ENCODE measurements at regions of chr2 and their contacts with region 1.

Region 1: DNA sequence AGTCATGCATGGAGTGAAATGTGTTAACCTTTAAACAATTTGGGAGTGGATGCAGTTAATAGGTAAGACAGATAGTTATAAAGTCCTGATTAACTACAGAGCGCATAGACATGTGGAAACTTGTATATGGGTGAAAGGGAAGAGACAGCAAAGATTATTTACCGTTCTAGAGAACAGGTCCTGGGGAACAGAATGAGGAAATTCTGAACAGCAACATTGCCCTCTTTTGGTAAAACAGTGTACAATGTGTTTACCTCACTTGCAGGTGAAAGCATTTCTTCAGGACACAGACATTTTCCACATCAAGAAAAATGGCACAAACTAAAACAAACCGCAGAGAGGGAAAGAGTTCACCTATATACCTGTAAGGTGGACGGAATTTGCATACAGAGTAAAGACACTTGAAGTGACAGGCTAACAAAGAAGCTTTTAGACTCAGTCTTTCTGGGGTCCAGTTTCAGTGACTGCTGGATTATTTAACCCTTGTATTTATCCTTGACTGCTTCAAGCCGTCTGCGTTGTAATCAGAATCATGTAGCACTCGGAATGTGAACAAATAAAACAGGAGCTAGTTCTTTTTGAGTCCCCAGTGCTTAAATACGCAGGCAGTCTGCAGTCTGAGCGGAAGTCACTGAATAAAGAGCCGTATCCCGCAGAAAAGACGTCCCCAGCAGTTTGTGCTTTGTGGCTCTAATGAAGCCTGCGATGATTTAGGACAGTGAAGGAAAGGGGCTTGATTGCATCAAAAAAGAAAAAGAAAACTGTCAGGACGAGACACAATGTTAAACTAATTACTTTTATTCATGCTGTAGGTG is 364.8 kb upstream of the GALNT5 start:
- DNase-seq: peak; percentile 34
- ATAC-seq: peak; percentile 96
- H3K4me3 ChIP-seq: no peak overlapping the region
- H3K27ac ChIP-seq: no peak overlapping the region
- H3K4me1 ChIP-seq: 0 out of 2 replicates have a peak, but pooled peaks cover 4% of the 10 kb centered on the region
- H3K27me3 ChIP-seq: peaks cover 0 to 3% of the 10 kb centered on the region in 2 experiments; a peak in 1 of 5 replicates
- CTCF ChIP-seq: peak; percentile 75
- EP300 ChIP-seq: no peak
- POLR2A ChIP-seq: no peak
- RAD21 ChIP-seq: no peak

Region 2: DNA sequence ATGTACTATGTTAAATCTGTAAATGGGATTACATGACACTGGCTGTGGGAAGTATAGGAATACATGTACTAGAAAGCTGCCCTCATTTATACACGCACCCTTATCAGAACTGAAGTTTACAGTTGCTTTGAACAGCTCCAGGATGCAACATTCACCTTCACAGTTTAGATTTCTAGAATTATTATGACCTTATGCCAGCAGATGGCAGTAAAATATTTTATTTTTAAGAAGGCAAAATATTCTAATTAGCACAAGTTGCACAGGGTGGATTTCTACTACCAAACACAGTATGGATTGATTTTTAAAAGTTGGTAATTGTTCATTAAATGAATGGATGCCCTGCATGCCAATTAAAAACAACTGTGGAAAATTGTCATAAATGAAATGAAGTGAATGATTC is 1523.7 kb before region 1 on chr2:
- CTCF ChIA-PET with region 1: no interaction called
- POLR2A ChIA-PET with region 1: no interaction called
- in situ Hi-C with region 1: no loop called
- intact Hi-C with region 1: loop called (anchors 1 kb)
- DNase-seq: peak; percentile 12
- ATAC-seq: peak; percentile 44; the same call in 2 of the 3 replicates
- H3K4me3 ChIP-seq: no peak overlapping the region
- H3K27ac ChIP-seq: no peak overlapping the region
- H3K4me1 ChIP-seq: no peaks in the 10 kb centered on the region
- H3K27me3 ChIP-seq: no peaks in the 10 kb centered on the region
- CTCF ChIP-seq: peak; percentile 33; the same call in 1 of the 2 replicates
- EP300 ChIP-seq: no peak
- POLR2A ChIP-seq: no peak
- RAD21 ChIP-seq: no peak

Region 3: GRCh38 chr2:155377266-155377680 is 1515.4 kb before region 1 on chr2:
- CTCF ChIA-PET with region 1: no interaction called
- POLR2A ChIA-PET with region 1: no interaction called
- in situ Hi-C with region 1: no loop called
- intact Hi-C with region 1: loop called (anchors 2 kb)
- DNase-seq: peak; percentile 7
- ATAC-seq: peak; percentile 43; the same call in 2 of the 3 replicates
- H3K4me3 ChIP-seq: no peak overlapping the region
- H3K27ac ChIP-seq: no peak overlapping the region
- H3K4me1 ChIP-seq: no peaks in the 10 kb centered on the region
- H3K27me3 ChIP-seq: no peaks in the 10 kb centered on the region
- CTCF ChIP-seq: peak; percentile 35
- EP300 ChIP-seq: no peak
- POLR2A ChIP-seq: no peak
- RAD21 ChIP-seq: no peak

Region 4: GRCh38 chr2:156332534-156333273 is 560.0 kb before region 1 on chr2 and contains the start of gene NR4A2:
- CTCF ChIA-PET with region 1: no interaction called
- POLR2A ChIA-PET with region 1: no interaction called
- in situ Hi-C with region 1: no loop called
- intact Hi-C with region 1: loop called (anchors 10 kb)
- DNase-seq: peak; percentile 16
- ATAC-seq: peak; percentile 60
- H3K4me3 ChIP-seq: peak within 1 kb of the TSS; percentile 51 to 77 (median 63)
- H3K27ac ChIP-seq: no peak within 1 kb of the TSS
- H3K4me1 ChIP-seq: peaks cover 30% of the 10 kb centered on the region
- H3K27me3 ChIP-seq: peaks cover 23 to 75% of the 10 kb centered on the region in 2 experiments
- CTCF ChIP-seq: no peak
- EP300 ChIP-seq: no peak
- POLR2A ChIP-seq: no peak
- RAD21 ChIP-seq: no peak
- total RNA-seq, gene NR4A2: not detected in 2 replicates

Region 5: GRCh38 chr2:156379071-156379470 is 513.6 kb before region 1 on chr2:
- CTCF ChIA-PET with region 1: no interaction called
- POLR2A ChIA-PET with region 1: no interaction called
- in situ Hi-C with region 1: no loop called
- intact Hi-C with region 1: no loop called
- DNase-seq: no peak
- ATAC-seq: no peak
- H3K4me3 ChIP-seq: no peak overlapping the region
- H3K27ac ChIP-seq: no peak overlapping the region
- H3K4me1 ChIP-seq: no peaks in the 10 kb centered on the region
- H3K27me3 ChIP-seq: no peaks in the 10 kb centered on the region; a peak in 1 of 5 replicates
- CTCF ChIP-seq: no peak
- EP300 ChIP-seq: no peak
- POLR2A ChIP-seq: no peak
- RAD21 ChIP-seq: no peak

Region 6: DNA sequence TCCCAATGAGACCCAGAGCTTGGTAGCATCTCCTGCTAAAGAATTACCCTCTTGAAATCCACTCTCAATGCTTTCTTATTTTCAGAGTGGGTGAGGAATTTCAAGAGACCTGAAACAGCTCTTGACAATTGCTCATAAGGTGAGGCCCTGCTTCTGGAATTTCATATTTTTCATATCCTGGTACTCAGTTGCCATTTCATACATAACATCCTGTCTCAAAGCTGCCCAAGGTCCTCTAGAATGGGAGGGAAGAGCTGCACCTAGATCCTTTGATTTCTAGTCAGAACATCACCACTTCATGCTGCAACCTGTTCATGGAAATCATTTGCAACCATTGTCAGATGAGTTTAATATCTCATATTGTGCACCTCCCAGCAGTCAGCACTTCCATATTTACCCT is 40.0 kb before region 1 on chr2:
- CTCF ChIA-PET with region 1: no interaction called
- POLR2A ChIA-PET with region 1: no interaction called
- in situ Hi-C with region 1: no loop called
- intact Hi-C with region 1: no loop called
- DNase-seq: no peak
- ATAC-seq: no peak
- H3K4me3 ChIP-seq: no peak overlapping the region
- H3K27ac ChIP-seq: no peak overlapping the region
- H3K4me1 ChIP-seq: no peaks in the 10 kb centered on the region
- H3K27me3 ChIP-seq: no peaks in the 10 kb centered on the region
- CTCF ChIP-seq: no peak
- EP300 ChIP-seq: no peak
- POLR2A ChIP-seq: no peak
- RAD21 ChIP-seq: no peak

Region 7: DNA sequence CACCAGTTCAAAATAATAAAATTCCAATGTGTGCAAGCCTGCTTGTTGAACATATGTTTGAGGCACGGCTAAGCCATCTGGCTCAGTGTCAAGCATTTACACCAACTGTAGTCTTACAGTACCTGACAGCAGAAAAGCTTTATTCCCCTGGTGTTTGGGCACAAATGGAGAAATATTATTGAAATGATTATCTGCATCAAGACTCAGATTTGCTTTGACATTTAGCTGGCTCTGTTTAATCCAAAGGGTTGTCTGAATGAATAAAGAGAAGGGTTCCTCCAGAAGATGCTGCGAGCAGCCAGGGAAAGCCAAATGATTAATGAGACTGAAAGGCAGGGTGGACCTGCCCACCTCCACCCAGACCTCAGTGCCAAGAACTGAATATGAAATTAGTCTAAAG is 28.3 kb before region 1 on chr2:
- CTCF ChIA-PET with region 1: no interaction called
- POLR2A ChIA-PET with region 1: no interaction called
- in situ Hi-C with region 1: no loop called
- intact Hi-C with region 1: no loop called
- DNase-seq: no peak
- ATAC-seq: no peak
- H3K4me3 ChIP-seq: no peak overlapping the region
- H3K27ac ChIP-seq: no peak overlapping the region
- H3K4me1 ChIP-seq: no peaks in the 10 kb centered on the region
- H3K27me3 ChIP-seq: no peaks in the 10 kb centered on the region
- CTCF ChIP-seq: no peak
- EP300 ChIP-seq: no peak
- POLR2A ChIP-seq: no peak
- RAD21 ChIP-seq: no peak

Region 8: DNA sequence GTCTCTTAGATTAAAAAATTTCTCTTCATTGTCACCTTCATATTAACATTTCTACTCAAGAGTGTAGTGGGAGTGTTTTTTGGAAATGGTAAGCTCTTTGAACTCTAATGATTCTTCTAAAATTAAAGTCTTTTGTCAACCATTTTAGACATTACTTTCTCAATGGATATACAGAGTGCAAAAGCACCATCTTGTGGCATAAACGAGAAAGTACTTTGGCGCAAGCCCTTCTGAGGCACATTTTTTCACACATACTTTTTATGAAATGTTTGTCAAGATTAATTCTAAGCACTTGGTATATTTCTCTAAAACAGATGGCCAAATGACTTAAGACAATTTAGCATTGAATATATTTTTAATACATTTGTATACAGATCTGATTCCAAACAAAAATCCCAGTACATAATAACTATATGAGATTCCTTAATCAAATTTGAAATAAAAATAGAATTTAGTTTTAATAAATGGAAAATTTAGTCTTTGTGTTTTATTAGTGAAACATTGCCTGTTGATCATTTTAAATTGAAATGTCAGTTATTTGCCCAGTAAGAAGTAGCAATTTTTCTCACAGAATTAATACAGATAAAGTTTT is 301.5 kb after region 1 on chr2:
- CTCF ChIA-PET with region 1: no interaction called
- POLR2A ChIA-PET with region 1: no interaction called
- in situ Hi-C with region 1: no loop called
- intact Hi-C with region 1: loop called (anchors 2 kb)
- DNase-seq: peak; percentile 46
- ATAC-seq: peak; percentile 70
- H3K4me3 ChIP-seq: no peak overlapping the region
- H3K27ac ChIP-seq: no peak overlapping the region
- H3K4me1 ChIP-seq: no peaks in the 10 kb centered on the region
- H3K27me3 ChIP-seq: no peaks in the 10 kb centered on the region; a peak in 1 of 5 replicates
- CTCF ChIP-seq: peak; percentile 71
- EP300 ChIP-seq: no peak
- POLR2A ChIP-seq: no peak
- RAD21 ChIP-seq: 0 out of 2 replicates have a peak, but pooled peaks have one; percentile 34